ENCODE measurements at regions of chr3 and their contacts with region 1.

Region 1: DNA sequence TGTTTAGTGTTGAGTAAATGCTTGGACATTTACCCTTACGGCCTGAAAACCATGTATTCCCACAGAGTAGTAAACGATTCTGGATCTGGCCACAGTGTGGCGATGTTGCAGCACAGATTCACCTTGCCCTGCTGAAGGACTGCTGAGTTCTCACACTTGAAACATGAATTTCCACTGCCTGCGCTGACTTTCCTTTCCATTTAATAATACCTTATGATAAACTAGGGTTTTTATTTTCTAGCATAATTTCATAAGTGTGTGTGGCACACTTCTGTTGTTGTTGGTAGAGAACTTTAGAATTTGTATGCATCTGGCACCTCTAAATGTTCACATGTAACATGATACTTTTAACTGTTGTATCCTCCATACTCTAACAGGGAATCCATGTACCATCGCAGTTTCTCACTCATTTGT is 53.9 kb downstream of the C3orf38 start:
- ATAC-seq: peak; percentile 83 to 100 (median 96)
- H3K4me3 ChIP-seq: no peak overlapping the region
- H3K27ac ChIP-seq: no peak overlapping the region
- H3K4me1 ChIP-seq: peaks cover 3% of the 10 kb centered on the region in 2 donors

Region 2: DNA sequence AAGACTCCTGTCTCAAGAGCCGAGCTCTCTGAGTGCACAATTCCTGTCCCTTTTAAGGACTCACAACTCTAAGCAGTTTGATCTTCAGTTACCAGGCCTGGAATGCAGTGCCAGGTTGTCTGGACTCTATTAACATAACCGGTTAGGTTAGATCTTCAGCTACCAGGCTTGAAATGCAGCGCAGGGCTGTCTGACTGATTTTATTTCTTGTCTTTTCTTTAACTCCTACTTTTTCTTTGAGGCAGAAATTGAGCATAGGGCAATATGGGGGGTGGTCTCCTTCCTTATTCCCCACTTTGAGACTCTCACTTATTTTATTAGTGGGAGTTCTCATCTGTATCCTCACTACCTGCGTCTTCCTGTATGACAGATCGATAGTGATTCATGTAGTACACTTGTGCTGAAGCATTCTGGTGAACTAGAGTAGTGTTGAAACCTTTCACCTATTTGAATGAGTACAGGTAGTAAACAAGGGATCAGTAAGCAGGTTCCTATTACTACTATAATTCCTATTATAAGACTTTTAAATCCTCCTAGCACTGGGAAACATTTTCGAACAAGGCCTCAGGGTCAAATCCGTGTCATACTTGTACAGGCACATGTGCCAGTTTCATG is 469.8 kb before region 1 on chr3:
- in situ Hi-C with region 1: no loop called
- ATAC-seq: no peak
- H3K4me3 ChIP-seq: no peak overlapping the region
- H3K27ac ChIP-seq: no peak overlapping the region
- H3K4me1 ChIP-seq: no peaks in the 10 kb centered on the region

Region 3: DNA sequence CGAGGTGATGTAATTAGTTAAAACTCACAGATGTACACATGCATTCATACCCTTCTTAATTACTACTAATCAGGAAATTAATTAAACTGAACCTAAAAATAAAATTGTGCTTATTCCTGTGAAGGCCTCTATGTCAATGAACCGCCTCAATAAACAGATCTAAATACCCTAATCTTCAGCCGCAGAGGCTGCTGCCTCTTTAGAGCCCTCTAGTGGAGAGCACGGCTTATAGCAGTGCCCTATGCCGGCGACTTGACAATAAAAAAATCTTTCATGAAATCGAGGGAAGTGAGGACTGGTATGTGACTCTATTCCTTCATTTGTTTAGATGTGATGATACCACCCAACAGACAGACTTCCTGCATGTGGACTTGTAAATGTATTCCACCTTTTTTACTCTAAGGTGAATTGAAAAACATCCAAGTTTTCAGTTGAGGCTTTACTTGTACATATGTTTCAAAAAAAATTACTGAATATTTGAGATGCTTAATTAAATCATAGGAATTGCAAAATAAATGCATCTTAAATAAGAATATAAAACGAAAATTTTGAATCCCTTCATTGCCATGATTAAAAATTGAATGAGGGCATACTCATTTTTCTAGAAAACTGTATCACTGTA is 895.4 kb after region 1 on chr3:
- in situ Hi-C with region 1: loop called in 5 of 9 experiments (anchors 25 kb)
- ATAC-seq: peak in 5 of 8 experiments; percentile 29 to 75 (median 51)
- H3K4me3 ChIP-seq: no peak overlapping the region
- H3K27ac ChIP-seq: no peak overlapping the region
- H3K4me1 ChIP-seq: no peaks in the 10 kb centered on the region

Region 4: GRCh38 chr3:89107461-89108290 is 904.0 kb after region 1 on chr3 and contains the start of gene EPHA3:
- in situ Hi-C with region 1: loop called in 3 of 9 experiments (anchors 25 kb)
- ATAC-seq: peak; percentile 97 to 100 (median 98)
- H3K4me3 ChIP-seq: peak within 1 kb of the TSS; percentile 41 to 77 (median 53)
- H3K27ac ChIP-seq: no peak within 1 kb of the TSS
- H3K4me1 ChIP-seq: peaks cover 0 to 9% of the 10 kb centered on the region in 2 donors
- total RNA-seq, gene EPHA3: 0.36 to 84.3 (median 42.7) TPM in 7 of 8 experiments, not detected in the other

Region 5: GRCh38 chr3:89851974-89852621 is 1648.4 kb after region 1 on chr3:
- in situ Hi-C with region 1: loop called in 2 of 9 experiments (anchors 25 kb)
- ATAC-seq: peak; percentile 70 to 100 (median 97)
- H3K4me3 ChIP-seq: no peak overlapping the region
- H3K27ac ChIP-seq: no peak overlapping the region
- H3K4me1 ChIP-seq: no peaks in the 10 kb centered on the region

Region 6: DNA sequence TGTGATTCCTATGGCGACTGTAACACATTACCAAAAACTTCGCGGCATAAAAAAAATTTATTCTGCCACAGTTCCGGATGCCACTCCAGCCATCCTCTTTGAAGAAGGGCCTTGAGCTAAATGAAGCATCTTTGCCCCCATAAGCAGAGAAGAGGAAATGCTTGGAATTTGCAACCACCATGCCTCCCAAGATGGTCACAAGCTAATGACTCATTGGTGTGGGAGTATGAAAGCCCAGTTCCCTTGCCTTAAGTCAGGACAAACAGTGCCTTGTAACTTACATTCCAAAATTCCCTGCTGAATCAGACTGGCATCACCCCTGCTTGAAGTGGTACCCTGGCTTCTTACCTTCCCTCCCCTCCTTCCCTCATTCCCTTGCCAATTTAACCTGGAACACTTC is 1981.2 kb after region 1 on chr3:
- in situ Hi-C with region 1: loop called in 5 of 9 experiments (anchors 25 kb)
- ATAC-seq: no peak
- H3K4me3 ChIP-seq: no peak overlapping the region
- H3K27ac ChIP-seq: no peak overlapping the region
- H3K4me1 ChIP-seq: no peaks in the 10 kb centered on the region

Measured in motor neuron (in vitro differentiated cells).